Heart left ventricle (tissue), 16 donors: ENCODE measurements at regions of chr5 and their contacts with region 1.

Region 1: GRCh38 chr5:108788142-108788541 is 40.4 kb downstream of the FER start:
- DNase-seq: peak; percentile 64 to 88 (median 69)
- ATAC-seq: peak; percentile 98 to 100 (median 98)
- H3K4me3 ChIP-seq: peak overlapping the region in 2 of 12 donors; percentile 7
- H3K27ac ChIP-seq: peak overlapping the region in 2 of 12 donors; percentile 23 to 58
- H3K4me1 ChIP-seq: peaks cover 0 to 23% (median 3%) of the 10 kb centered on the region in 12 donors
- H3K27me3 ChIP-seq: no peaks in the 10 kb centered on the region
- CTCF ChIP-seq: no peak
- POLR2A ChIP-seq: no peak

Region 2: GRCh38 chr5:108748401-108749127 is 39.6 kb before region 1 on chr5:
- intact Hi-C with region 1: no loop called
- DNase-seq: peak; percentile 99 to 100 (median 99)
- ATAC-seq: peak; percentile 98 to 99 (median 98)
- H3K4me3 ChIP-seq: peak overlapping the region; percentile 83 to 98 (median 91)
- H3K27ac ChIP-seq: peak overlapping the region; percentile 91 to 100 (median 97)
- H3K4me1 ChIP-seq: peaks cover 0 to 31% (median 8%) of the 10 kb centered on the region in 12 donors
- H3K27me3 ChIP-seq: no peaks in the 10 kb centered on the region
- CTCF ChIP-seq: peak in 7 of 12 donors; percentile 17 to 34 (median 21)
- POLR2A ChIP-seq: peak; percentile 89 to 99

Region 3: GRCh38 chr5:109329333-109330237 is 541.4 kb after region 1 on chr5:
- intact Hi-C with region 1: loop called in 1 of 10 experiments (anchors 10 kb)
- DNase-seq: no peak
- ATAC-seq: peak in 3 of 4 donors; percentile 55 to 81 (median 78)
- H3K4me3 ChIP-seq: no peak overlapping the region
- H3K27ac ChIP-seq: peak overlapping the region in 1 of 12 donors; percentile 52
- H3K4me1 ChIP-seq: peaks cover 0 to 21% (median 0%) of the 10 kb centered on the region in 12 donors
- H3K27me3 ChIP-seq: no peaks in the 10 kb centered on the region
- CTCF ChIP-seq: no peak
- POLR2A ChIP-seq: no peak